ENCODE measurements at regions of chr7 and their contacts with region 1.

Region 1: DNA sequence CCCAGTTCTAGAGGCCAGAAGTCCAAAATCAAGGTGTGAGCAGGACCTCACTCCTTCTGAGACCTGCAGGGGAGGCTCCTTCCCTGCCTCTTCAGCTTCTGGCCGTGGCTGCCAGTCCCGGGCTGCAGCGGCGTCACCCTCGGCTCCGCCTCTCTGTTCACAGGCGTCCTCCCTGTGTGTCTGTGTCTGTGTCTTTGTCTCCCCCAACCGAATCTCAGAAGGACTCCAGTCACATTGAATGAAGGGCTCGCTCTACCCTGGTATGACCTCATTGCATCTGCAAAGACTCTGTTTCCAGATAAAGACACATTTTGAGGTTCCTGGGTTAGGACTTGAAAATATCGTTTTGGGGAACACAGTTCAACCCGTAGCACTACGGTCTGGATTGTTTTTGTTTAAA is 33.1 kb upstream of the GALNT11 start:
- DNase-seq: peak; percentile 81 to 84
- H3K4me3 ChIP-seq: no peak overlapping the region
- H3K4me3 Mint-ChIP-seq: no peak overlapping the region
- H3K27ac Mint-ChIP-seq: no peak overlapping the region
- H3K4me1 ChIP-seq: 0 out of 2 replicates have a peak, but pooled peaks cover 5% of the 10 kb centered on the region
- H3K4me1 Mint-ChIP-seq: no peaks in the 10 kb centered on the region
- H3K27me3 ChIP-seq: no peaks in the 10 kb centered on the region
- H3K27me3 Mint-ChIP-seq: no peaks in the 10 kb centered on the region
- CTCF ChIP-seq: peak in 1 of 2 experiments; percentile 60

Region 2: DNA sequence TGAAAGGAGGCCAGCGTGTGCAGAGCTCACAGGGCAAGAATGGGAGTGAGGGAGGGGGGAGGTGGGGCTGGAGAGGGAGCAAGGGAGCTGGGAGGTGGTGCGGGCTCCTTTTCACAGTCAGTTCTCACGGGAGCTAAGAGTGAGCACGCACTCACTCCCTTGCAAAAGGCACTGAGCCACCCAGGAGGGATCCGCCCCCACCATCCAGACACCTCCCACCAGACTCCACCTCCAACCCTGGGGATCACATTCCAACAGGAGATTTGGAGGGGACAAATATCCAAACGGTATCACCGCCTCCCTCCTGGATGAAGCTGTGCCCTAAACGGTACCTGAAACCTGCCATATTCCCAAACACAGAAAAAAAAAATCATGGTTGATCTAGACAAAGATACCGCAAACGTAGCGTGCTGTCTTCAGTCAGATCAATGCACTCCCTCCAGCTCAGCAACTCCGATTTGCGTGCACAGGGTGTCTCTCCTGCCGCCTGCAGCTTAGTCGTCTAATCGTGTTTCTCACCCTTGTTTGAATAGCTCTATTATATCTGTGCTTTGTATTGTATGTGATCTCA is 95.1 kb before region 1 on chr7:
- CTCF ChIA-PET with region 1: no interaction called
- POLR2A ChIA-PET with region 1: no interaction called
- intact Hi-C with region 1: no loop called
- DNase-seq: peak in 1 of 2 experiments; percentile 33
- H3K4me3 ChIP-seq: peak overlapping the region; percentile 13; the same call in 1 of the 2 replicates
- H3K4me3 Mint-ChIP-seq: peak overlapping the region; percentile 57
- H3K27ac Mint-ChIP-seq: no peak overlapping the region
- H3K4me1 ChIP-seq: no peaks in the 10 kb centered on the region
- H3K4me1 Mint-ChIP-seq: no peaks in the 10 kb centered on the region
- H3K27me3 ChIP-seq: no peaks in the 10 kb centered on the region
- H3K27me3 Mint-ChIP-seq: peaks cover 15% of the 10 kb centered on the region
- CTCF ChIP-seq: peak in 1 of 2 experiments; percentile 8

Region 3: GRCh38 chr7:152006336-152006735 is 14.0 kb after region 1 on chr7:
- CTCF ChIA-PET with region 1: no interaction called
- POLR2A ChIA-PET with region 1: no interaction called
- intact Hi-C with region 1: no loop called
- DNase-seq: no peak
- H3K4me3 ChIP-seq: no peak overlapping the region
- H3K4me3 Mint-ChIP-seq: no peak overlapping the region
- H3K27ac Mint-ChIP-seq: no peak overlapping the region
- H3K4me1 ChIP-seq: no peaks in the 10 kb centered on the region
- H3K4me1 Mint-ChIP-seq: peaks cover 9% of the 10 kb centered on the region
- H3K27me3 ChIP-seq: no peaks in the 10 kb centered on the region
- H3K27me3 Mint-ChIP-seq: peaks cover 8% of the 10 kb centered on the region
- CTCF ChIP-seq: no peak

Region 4: GRCh38 chr7:152108359-152108758 is 116.0 kb after region 1 on chr7:
- CTCF ChIA-PET with region 1: no interaction called
- POLR2A ChIA-PET with region 1: no interaction called
- intact Hi-C with region 1: loop called (anchors 1 kb)
- DNase-seq: peak; percentile 57 to 61
- H3K4me3 ChIP-seq: no peak overlapping the region
- H3K4me3 Mint-ChIP-seq: no peak overlapping the region
- H3K27ac Mint-ChIP-seq: no peak overlapping the region
- H3K4me1 ChIP-seq: no peaks in the 10 kb centered on the region
- H3K4me1 Mint-ChIP-seq: peaks cover 16% of the 10 kb centered on the region
- H3K27me3 ChIP-seq: no peaks in the 10 kb centered on the region
- H3K27me3 Mint-ChIP-seq: no peaks in the 10 kb centered on the region
- CTCF ChIP-seq: peak in 1 of 2 experiments; percentile 37

Measured in Caco-2 (cell line).